WTC11 (cell line): ENCODE measurements at regions of chr9 and their contacts with region 1.

Region 1: DNA sequence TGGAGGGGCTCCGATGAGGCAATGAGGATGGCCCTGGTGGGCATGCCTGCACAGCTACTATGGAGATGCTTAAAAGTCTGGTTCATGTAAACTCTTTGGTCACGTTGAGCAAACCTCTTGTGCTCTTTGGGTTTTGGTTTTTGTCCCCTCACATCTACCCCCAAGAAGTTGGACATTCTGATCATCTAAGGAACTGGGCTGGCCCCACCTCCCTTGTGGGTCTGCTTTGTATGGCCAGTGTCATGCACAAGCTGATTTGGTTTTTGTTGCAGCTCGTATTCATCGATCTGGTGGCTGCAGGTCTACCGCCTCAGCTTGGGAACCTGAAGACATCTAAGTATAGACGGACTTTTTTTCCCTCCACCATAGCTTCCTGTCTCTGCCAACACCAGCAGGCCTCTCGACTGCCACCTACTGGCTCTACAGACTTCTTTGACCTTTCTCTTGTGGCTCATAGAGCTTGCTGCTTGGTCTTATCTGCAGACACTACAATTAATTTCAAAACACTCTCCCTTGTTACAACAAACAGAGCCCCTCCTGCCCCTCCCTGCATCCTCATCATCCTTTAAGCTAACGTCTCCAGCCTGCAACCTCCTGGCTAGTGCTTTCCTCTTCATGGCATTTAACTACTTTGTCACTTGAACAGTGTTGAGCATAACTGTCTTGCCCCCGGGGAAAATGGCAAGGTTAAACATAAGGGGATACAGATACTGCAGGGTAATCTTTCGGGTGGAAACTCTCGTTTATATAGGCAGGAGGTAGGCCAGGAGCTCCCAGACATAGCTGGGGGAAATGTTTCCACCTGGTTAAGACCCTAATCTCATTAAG is 34.5 kb downstream of the TSTD2 start:
- DNase-seq: peak; percentile 69
- ATAC-seq: peak; percentile 90
- H3K4me3 Mint-ChIP-seq: no peak overlapping the region
- H3K27ac Mint-ChIP-seq: peak overlapping the region; percentile 75; the same call in 1 of the 2 replicates
- H3K4me1 Mint-ChIP-seq: peaks cover 4% of the 10 kb centered on the region
- H3K27me3 Mint-ChIP-seq: no peaks in the 10 kb centered on the region
- CTCF ChIP-seq: peak; percentile 81

Region 2: DNA sequence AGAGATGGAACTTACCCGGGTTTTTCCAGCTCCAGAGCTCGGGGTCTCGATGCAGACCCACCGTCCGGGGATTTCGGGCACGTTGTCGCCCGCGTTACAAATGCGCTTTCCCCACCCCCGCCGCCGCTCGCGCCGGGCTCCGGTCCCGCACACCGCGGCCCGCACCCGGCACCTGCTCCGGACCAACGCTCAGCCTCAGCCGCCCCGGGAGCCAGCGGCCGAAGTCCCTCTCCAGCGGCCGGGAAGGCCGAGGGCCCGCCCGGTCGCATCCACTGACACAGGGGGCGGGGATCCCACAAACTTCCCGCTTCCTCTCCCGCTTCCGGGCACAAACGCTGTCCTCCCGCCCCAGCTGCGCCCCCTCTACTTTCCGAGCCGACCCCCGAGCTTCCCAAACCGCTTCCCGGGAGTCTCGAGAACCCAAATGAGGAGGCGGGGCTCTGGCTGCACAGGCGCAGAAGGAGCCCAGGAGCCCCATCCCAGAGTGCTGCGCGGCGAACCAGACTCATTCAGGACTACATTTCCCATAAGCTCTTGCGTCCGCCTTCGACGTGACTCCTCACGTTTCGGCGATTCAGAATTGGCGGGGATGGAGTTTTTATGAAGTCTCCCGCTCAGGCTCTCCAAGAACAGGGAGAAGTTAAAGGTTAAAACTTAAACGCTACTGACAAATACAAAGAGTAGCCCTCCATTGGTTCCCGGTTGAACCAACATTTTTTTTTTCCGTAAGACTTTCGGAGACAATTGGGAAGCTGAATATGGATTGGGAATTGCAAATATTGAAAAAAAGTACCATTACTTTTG is 744.4 kb before region 1 on chr9 and contains the start of gene ZNF782:
- CTCF ChIA-PET with region 1: interaction called, 13 read pairs
- POLR2A ChIA-PET with region 1: no interaction called
- DNase-seq: peak; percentile 96
- ATAC-seq: peak; percentile 94
- H3K4me3 Mint-ChIP-seq: peak within 1 kb of the TSS; percentile 98
- H3K27ac Mint-ChIP-seq: peak within 1 kb of the TSS; percentile 96
- H3K4me1 Mint-ChIP-seq: peaks cover 44% of the 10 kb centered on the region
- H3K27me3 Mint-ChIP-seq: no peaks in the 10 kb centered on the region; the same call in 1 of the 2 replicates
- CTCF ChIP-seq: no peak
- total RNA-seq, gene ZNF782: 4.4 to 6.2 TPM (median 5.2 TPM) in 3 replicates

Region 3: DNA sequence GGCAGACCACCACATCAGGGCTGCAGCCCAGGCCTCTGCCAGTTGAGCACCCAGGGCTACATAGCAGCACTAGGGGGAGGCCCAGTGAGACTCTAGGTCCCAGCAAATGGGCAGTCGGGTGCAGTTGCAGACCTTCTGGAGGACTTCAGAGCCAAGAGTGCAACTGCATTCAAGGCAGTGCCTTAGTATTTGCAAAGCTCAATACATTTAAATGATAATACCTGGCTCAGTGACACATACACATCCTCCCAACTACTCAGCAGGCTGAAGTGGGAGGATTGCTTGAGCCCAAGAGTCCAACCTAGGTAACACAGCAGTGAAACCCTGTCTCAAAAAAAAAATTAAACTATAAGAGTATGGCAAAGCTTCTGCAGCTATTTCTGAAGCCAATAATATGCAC is 135.8 kb before region 1 on chr9:
- CTCF ChIA-PET with region 1: interaction called, 112 read pairs
- POLR2A ChIA-PET with region 1: no interaction called
- DNase-seq: no peak
- ATAC-seq: peak; percentile 81
- H3K4me3 Mint-ChIP-seq: no peak overlapping the region
- H3K27ac Mint-ChIP-seq: no peak overlapping the region
- H3K4me1 Mint-ChIP-seq: peaks cover 7% of the 10 kb centered on the region
- H3K27me3 Mint-ChIP-seq: no peaks in the 10 kb centered on the region
- CTCF ChIP-seq: no peak

Region 4: GRCh38 chr9:97487107-97487506 is 111.6 kb before region 1 on chr9:
- CTCF ChIA-PET with region 1: interaction called, 28 read pairs
- POLR2A ChIA-PET with region 1: no interaction called
- DNase-seq: no peak
- ATAC-seq: no peak
- H3K4me3 Mint-ChIP-seq: no peak overlapping the region
- H3K27ac Mint-ChIP-seq: no peak overlapping the region
- H3K4me1 Mint-ChIP-seq: no peaks in the 10 kb centered on the region
- H3K27me3 Mint-ChIP-seq: peaks cover 9% of the 10 kb centered on the region
- CTCF ChIP-seq: 0 out of 2 replicates have a peak, but pooled peaks have one; percentile 16

Region 5: DNA sequence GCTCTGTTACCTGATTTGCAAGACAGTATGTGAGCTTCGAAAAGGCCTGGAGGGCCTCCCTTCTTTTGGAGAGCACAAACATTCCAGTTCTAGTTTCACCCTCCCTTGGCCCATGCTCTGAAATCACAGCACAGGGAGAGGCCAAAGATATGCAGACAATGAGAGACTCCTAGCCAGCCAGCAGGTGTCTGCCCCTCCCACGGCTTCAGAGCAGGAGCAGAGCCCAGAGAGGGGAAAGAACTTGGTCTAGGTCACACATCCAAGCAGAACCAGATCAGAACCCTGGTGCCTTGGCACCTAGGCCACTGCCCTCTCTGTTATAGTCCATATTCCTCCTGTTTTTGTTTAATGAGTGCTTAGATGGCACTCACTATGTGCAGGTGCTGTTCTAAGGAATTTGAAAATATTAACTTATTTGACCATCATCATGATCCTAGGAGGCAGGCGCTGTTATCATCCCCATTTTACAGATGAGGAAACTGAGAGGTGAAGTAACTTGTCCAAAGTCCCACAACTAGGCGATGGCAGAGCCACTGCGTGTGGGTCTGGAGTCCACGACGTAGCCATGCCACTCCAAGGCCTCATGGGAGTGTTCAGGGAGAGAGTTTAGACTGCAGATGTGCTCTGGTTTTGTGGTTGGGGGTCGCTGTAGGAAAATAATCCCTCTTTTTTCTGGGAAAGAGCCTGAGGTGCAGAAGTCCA is 70.0 kb before region 1 on chr9:
- CTCF ChIA-PET with region 1: interaction called, 16 read pairs
- POLR2A ChIA-PET with region 1: no interaction called
- DNase-seq: peak; percentile 64
- ATAC-seq: peak; percentile 91
- H3K4me3 Mint-ChIP-seq: no peak overlapping the region
- H3K27ac Mint-ChIP-seq: peak overlapping the region; percentile 97
- H3K4me1 Mint-ChIP-seq: peaks cover 33% of the 10 kb centered on the region
- H3K27me3 Mint-ChIP-seq: no peaks in the 10 kb centered on the region
- CTCF ChIP-seq: no peak

Region 6: GRCh38 chr9:97578856-97579255 is 19.8 kb before region 1 on chr9:
- CTCF ChIA-PET with region 1: interaction called, 11 read pairs
- POLR2A ChIA-PET with region 1: no interaction called
- DNase-seq: no peak
- ATAC-seq: no peak
- H3K4me3 Mint-ChIP-seq: no peak overlapping the region
- H3K27ac Mint-ChIP-seq: no peak overlapping the region
- H3K4me1 Mint-ChIP-seq: no peaks in the 10 kb centered on the region
- H3K27me3 Mint-ChIP-seq: peaks cover 5% of the 10 kb centered on the region; the same call in 1 of the 2 replicates
- CTCF ChIP-seq: no peak